ENCODE measurements at regions of chr2 and their contacts with region 1.

Region 1: DNA sequence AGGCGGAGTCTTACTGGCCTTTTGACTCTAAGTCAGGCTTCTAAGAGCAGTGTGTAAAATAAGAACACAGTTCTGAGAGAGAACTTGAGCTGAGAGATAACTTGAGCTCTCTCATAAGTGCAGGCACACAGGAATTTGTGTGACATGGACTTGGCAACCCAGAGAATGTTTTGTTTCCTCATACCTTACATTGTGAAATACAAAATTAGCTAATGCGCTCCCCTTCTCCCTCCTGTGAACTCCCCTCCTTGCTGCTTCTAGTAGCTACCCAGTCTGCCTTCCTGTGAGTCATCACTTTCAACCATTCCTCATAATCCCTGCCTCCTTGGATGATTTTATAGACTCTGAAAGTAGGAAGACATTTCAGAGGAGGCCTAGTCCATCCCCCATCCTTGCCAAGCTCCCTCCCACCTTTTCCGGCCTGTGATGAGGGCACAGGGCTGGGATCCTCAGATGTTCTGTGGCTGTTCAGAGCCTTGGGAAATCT is 22.6 kb downstream of the FER1L5 start:
- DNase-seq: peak; percentile 98
- H3K4me3 ChIP-seq: no peak overlapping the region
- CTCF ChIP-seq: no peak

Region 2: DNA sequence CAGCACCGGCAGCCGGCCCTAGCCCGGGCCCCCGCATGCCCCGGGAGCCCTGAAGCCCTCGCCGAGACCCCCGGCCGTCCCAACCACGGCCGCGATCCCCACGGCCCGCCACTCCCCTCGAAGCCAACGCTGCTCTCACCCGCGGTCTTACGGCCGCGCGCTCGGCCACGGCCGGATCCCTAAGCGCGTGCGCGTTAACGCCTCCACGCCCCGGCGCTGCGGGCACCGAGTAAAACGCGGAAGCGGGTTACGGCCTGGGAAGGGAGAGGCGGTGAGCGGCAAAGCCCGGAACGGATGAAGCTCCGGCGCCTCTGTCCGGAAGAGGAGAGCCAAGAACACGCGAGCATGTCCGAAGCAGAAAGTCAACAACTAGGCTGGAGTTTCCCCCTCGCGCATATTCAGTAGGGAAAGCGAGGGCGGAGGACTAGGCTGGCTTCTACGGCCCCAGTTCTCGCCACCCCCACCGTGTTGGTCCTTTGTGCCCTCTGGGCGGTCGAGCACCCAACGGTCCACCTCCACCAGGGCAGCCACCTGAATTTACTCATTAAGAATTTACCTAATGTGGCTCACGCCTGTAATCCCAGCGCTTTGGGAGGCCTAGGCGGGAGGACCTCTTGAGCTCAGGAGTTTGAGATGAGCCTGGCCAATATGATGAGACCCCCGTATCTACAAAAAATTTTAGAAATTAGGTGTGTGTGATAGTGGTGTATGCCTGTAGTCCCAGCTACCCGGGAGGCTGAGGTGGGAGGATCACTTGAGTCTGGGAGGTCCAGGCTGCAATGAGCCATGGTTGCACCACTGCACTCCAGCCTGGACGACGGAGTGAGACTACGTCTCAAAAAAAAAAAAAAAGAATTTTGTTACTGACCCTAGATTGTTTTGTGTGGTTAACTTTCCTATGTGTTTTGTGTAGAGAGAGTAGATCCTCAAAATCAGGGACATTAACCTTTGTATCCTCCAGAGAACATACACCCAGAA is 26.7 kb before region 1 on chr2 and contains the start of gene KANSL3:
- CTCF ChIA-PET with region 1: interaction called, 3 read pairs
- POLR2A ChIA-PET with region 1: interaction called, 13 read pairs
- DNase-seq: peak; percentile 68
- H3K4me3 ChIP-seq: peak within 1 kb of the TSS; percentile 77
- CTCF ChIP-seq: no peak

Region 3: GRCh38 chr2:96679848-96680247 is 14.7 kb after region 1 on chr2:
- CTCF ChIA-PET with region 1: no interaction called
- POLR2A ChIA-PET with region 1: no interaction called
- DNase-seq: no peak
- H3K4me3 ChIP-seq: no peak overlapping the region
- CTCF ChIP-seq: no peak

Region 4: DNA sequence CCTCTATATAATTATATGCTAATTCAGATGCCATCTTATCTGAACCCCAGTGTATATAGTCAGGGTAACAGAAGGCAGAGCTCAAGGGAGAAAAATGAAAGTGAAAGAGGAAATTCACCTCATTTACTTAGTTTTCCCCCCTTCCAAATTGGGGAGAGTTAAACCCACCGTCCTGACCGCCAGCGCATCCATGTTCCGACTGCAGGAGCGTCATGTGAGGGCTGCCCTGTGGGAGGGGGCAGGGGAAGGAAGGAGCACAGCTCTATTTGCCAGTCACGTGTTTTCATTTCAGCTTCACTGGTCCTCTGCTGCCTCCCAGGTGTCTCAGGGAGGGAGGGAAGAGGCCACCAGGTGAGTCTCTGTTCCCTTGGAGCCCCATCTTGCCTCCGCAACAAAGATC is 108.8 kb after region 1 on chr2:
- CTCF ChIA-PET with region 1: no interaction called
- POLR2A ChIA-PET with region 1: no interaction called
- DNase-seq: no peak
- H3K4me3 ChIP-seq: no peak overlapping the region
- CTCF ChIP-seq: no peak